PC-9 (cell line): ENCODE measurements at regions of chr7 and their contacts with region 1.

Region 1: DNA sequence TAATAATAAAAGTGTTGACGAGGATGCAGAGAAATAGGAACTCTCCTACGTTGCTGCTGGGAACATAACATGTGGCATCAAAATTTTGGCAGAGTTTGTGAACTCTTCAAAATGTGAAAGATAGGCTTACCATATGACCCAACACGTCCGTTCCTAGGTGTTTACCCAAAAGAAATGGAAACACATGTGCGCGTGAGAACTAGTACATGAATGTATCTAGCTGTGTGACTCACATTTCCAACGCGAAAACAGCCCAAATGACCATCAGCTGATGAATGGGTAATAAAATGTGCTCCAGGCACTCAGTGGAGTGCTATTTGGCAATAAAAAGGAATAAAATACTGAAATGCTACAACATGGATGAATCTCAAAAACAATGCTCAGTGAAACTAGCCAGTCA is 10.4 kb upstream of the ELFN1 start:
- DNase-seq: no peak
- H3K4me3 ChIP-seq: no peak overlapping the region
- H3K27ac ChIP-seq: no peak overlapping the region
- H3K4me1 ChIP-seq: peaks cover 2% of the 10 kb centered on the region; the same call in 1 of the 2 replicates
- H3K27me3 ChIP-seq: peaks cover 76% of the 10 kb centered on the region
- CTCF ChIP-seq: no peak

Region 2: DNA sequence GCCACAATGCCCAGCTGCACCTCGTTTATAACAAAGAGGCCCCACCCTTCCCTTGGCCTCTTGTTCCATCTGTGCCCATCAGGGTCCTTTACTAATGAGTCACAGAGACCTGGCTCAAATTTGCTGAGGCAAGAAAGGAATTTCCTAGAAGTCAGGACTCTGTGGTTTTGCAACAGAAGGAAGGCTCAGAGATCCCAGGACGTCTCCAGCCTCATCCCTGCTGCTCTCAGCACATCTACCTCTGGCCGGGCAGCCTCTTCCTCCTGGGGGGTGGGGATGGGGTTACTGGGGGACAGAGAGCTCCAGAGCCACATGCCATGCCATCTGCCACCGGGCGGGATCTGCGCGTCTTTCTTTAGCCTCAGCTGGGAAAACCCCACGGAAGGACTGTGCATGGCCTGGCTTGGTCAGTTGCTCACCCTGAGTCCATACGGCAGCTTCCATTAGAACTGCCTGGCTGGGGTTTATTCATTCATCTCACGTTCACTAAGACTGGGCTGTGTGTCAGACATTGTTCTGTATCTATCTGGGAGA is 47.9 kb before region 1 on chr7:
- CTCF ChIA-PET with region 1: no interaction called
- POLR2A ChIA-PET with region 1: no interaction called
- intact Hi-C with region 1: loop called (anchors 5 kb)
- DNase-seq: peak; percentile 70 to 72
- H3K4me3 ChIP-seq: no peak overlapping the region
- H3K27ac ChIP-seq: no peak overlapping the region
- H3K4me1 ChIP-seq: peaks cover 4% of the 10 kb centered on the region
- H3K27me3 ChIP-seq: peaks cover 47% of the 10 kb centered on the region
- CTCF ChIP-seq: no peak

Region 3: GRCh38 chr7:1767524-1767923 is 107.8 kb after region 1 on chr7:
- CTCF ChIA-PET with region 1: no interaction called
- POLR2A ChIA-PET with region 1: no interaction called
- intact Hi-C with region 1: no loop called
- DNase-seq: no peak
- H3K4me3 ChIP-seq: no peak overlapping the region
- H3K27ac ChIP-seq: no peak overlapping the region
- H3K4me1 ChIP-seq: no peaks in the 10 kb centered on the region
- H3K27me3 ChIP-seq: peaks cover 66% of the 10 kb centered on the region
- CTCF ChIP-seq: no peak; the same call in 1 of the 2 replicates